HEK293T (cell line): ENCODE measurements at regions of chr1 and their contacts with region 1.

Region 1: DNA sequence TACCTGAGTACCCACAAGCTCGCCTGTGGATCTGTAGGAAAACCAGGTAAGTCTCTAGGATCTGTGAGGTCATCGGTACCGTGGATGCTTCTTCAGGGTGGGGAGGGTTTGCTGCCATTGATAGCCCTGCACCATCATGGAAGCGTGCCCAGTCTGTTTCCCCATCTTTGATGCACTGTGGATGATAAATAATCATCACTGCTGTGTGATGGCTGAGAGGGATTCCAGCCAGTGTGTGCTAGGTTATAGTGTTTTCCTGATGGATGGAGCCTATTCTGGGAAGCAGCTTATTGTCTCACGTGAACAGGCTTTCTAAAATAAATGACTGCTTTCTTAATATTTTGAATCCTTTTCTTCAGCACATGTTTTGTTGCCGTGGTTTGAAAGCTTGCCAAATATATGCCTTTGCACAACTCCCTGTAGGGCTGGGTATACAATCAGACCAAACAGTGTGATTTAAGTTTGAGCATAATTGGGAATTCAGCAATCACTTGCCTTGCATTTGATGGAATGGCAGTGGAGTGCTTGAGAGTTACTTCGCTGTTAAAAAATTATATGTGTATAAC is 113.8 kb downstream of the CAMTA1 start:
- DNase-seq: no peak

Region 2: DNA sequence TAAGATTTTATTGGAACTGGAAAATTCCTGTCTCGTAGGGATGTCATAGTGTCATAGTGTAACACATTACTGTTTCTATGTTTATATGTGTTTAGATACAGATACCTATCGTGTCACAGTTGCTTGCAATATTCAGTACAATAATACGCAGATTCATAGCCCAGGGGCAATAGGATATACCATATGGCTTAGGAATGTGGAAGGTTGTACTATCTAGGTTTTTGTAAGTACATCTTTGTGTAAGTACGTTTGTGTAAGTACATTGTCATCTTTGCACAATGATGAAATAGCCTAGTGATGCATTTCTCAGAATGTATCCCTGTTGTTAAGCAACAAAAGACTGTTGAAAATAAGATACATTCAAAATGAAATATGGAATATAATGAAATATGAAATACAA is 44.9 kb before region 1 on chr1:
- CTCF ChIA-PET with region 1: no interaction called
- POLR2A ChIA-PET with region 1: no interaction called
- DNase-seq: no peak

Region 3: DNA sequence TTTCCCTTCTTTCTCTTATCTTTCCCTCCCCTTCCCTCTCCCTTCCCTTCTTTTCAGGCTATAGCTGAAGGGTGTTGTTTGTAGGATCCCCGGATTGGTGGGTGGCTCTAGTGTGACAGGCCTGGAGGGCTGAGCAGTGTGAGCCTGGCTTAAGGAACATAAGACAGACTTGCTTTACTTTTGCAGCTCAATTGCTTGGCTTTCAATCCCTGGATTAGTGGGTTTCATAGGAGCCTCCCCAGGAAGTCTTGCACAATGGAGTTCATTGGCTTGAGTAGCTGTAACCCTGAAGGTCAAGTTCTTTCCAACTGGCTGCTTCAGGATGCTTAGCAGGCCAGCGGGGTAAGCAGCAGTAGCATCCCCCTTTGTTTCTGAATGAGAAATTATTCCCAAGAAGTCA is 12.9 kb after region 1 on chr1:
- CTCF ChIA-PET with region 1: no interaction called
- POLR2A ChIA-PET with region 1: no interaction called
- DNase-seq: no peak

Region 4: DNA sequence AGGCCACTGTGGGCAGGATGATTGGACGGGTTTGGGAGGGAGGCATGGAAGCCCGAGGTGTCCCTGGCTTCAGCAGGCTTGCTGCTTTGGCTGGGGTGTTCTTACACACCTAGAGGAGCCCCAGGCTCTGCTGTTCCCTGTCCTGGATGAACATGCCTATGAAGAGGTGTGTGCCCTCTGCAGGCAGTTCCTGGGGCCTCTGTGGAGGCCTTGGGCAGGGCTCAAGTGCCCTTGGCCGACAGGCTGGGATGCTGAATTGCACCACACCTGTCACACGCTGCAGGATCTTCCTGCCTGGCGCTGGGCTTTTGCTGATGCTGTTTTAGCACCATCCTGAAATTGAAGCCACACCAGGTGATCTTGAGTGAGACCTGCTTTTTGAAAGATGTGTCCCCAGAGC is 457.0 kb after region 1 on chr1:
- CTCF ChIA-PET with region 1: interaction called, 10 read pairs
- POLR2A ChIA-PET with region 1: no interaction called
- DNase-seq: no peak